ENCODE measurements at regions of chr20 and their contacts with region 1.

Region 1: DNA sequence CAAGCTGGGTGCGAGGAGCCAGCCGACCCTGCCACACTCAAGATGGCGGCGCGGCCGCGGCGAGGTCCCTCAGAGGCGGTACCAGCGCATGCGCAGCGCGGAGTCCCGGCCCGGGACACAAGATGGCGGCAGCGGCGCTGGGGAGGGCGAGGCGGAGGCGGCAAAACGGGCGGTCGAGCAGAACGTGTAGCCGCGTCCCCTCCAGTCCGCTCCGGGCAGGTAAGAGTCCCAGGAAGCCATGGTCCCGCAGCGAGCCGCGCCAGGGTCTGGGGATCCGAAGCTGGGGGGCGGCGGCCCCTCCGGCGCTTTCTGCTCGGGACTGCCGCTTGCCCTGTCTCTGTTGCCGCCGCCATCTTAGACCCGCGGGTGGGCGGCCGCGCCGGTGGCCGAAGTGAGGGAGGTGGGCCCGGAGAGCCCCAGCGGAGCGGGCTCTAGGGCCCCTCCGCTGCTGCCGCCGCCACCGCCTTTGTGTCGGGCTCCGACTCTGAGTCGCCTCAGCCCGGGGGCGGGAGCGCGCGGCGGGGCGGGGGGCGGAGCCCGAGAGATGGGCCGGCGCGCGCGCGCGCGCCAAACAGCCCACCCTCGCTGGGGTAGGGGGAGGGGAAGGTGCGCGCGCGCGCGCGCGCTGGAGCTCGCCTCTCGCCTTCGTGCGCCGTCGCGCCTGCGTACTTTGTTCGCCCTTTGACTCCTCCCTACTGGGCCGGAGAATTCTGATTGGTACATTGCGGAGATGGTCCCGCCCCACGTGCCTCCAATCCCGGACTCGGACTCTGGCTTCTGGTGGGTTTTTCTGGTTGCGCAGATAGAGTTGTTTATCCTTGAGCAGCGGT is at the start of gene PCIF1:
- DNase-seq: peak; percentile 98 to 99 (median 98)
- H3K4me3 ChIP-seq: peak within 1 kb of the TSS; percentile 83 to 97
- H3K4me3 Mint-ChIP-seq: peak within 1 kb of the TSS; percentile 95 to 99 (median 97)
- H3K27ac ChIP-seq: peak within 1 kb of the TSS; percentile 99
- H3K27ac Mint-ChIP-seq: peak within 1 kb of the TSS; percentile 96 to 99 (median 98)
- H3K4me1 ChIP-seq: peaks cover 35% of the 10 kb centered on the region
- H3K4me1 Mint-ChIP-seq: peaks cover 17 to 48% (median 30%) of the 10 kb centered on the region in 4 donors
- H3K27me3 ChIP-seq: no peaks in the 10 kb centered on the region
- H3K27me3 Mint-ChIP-seq: no peaks in the 10 kb centered on the region
- total RNA-seq, gene PCIF1: 63.1 to 69.4 TPM

Region 2: DNA sequence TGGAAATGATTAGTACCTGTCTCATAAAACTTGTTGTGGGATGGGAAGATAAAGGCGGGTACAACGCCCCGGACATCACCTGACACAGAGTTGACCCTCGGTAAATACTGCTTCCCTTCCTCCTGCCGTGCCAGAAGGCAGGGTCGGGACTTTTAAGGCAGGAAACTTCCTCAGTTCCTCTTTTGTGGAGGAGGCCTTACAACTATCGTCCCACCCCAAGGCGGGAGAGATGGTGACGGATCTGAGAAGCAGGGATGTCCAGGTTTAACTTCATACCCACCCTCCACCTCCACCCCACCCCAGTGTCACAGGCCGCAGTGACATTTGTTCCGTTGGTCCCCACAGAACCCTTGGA is 142.5 kb before region 1 on chr20:
- CTCF ChIA-PET with region 1: no interaction called
- POLR2A ChIA-PET with region 1: interaction called, 15 read pairs
- intact Hi-C with region 1: loop called (anchors 1 kb)
- DNase-seq: no peak
- H3K4me3 ChIP-seq: peak overlapping the region; percentile 79 to 93
- H3K4me3 Mint-ChIP-seq: peak overlapping the region; percentile 85 to 98 (median 93)
- H3K27ac ChIP-seq: peak overlapping the region; percentile 88
- H3K27ac Mint-ChIP-seq: peak overlapping the region; percentile 83 to 99 (median 95)
- H3K4me1 ChIP-seq: peaks cover 16% of the 10 kb centered on the region
- H3K4me1 Mint-ChIP-seq: peaks cover 11 to 18% (median 14%) of the 10 kb centered on the region in 4 donors
- H3K27me3 ChIP-seq: no peaks in the 10 kb centered on the region
- H3K27me3 Mint-ChIP-seq: no peaks in the 10 kb centered on the region

Region 3: DNA sequence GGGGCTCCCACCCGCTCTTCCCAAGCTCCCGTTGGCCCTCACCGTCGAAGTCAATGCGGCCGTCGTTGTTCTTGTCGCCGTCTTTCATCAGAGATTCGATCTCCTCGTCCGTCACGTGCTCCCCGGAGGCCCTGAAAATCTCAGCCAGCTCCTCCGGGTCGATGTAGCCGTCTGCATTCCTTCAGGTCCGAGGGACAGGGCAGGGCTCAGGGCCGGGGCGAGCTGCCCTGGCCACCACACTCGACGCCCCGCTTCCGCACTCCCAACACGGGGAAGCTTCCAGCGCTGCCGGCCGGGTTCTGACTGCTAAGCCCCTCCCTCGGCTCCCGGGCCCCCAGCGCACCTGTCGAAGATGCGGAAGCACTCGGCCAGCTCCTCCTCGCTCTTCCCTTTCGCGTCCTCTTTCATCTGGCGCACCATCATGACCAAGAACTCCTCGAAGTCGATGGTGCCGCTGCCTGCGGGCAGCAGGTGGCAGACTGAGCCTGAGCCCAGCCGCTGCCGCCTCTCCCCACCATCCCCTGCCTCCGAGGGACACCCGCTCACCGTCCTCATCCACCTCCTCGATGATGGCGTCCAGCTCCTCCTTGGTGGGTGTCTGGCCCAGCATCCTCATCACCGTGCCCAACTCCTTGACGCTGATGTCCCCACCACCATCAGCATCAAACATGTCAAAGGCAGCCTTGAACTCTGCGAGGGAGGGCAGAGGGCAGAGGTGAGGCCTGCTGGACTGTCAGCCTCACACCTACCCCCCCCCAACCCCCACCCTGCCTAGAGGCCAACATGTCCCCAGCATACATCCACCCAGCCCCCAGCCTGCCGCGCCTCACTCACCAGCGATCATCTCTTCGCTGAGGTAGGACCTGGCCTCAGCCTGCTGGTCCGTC is 110.6 kb before region 1 on chr20:
- CTCF ChIA-PET with region 1: interaction called, 3 read pairs
- POLR2A ChIA-PET with region 1: interaction called, 10 read pairs
- intact Hi-C with region 1: no loop called
- DNase-seq: peak; percentile 37 to 58 (median 47)
- H3K4me3 ChIP-seq: peak overlapping the region in 1 of 2 donors; percentile 46
- H3K4me3 Mint-ChIP-seq: peak overlapping the region; percentile 64 to 84 (median 80)
- H3K27ac ChIP-seq: no peak overlapping the region
- H3K27ac Mint-ChIP-seq: peak overlapping the region in 6 of 7 donors; percentile 2 to 86 (median 66)
- H3K4me1 ChIP-seq: peaks cover 7% of the 10 kb centered on the region
- H3K4me1 Mint-ChIP-seq: peaks cover 7 to 22% (median 15%) of the 10 kb centered on the region in 4 donors
- H3K27me3 ChIP-seq: no peaks in the 10 kb centered on the region
- H3K27me3 Mint-ChIP-seq: peaks cover 6 to 19% of the 10 kb centered on the region in 2 donors

Region 4: GRCh38 chr20:45880988-45881788 is 53.6 kb before region 1 on chr20 and contains the start of gene ZSWIM1:
- CTCF ChIA-PET with region 1: interaction called, 7 read pairs
- POLR2A ChIA-PET with region 1: interaction called, 141 read pairs
- intact Hi-C with region 1: loop called (anchors 1 kb)
- DNase-seq: peak; percentile 97 to 99 (median 97)
- H3K4me3 ChIP-seq: peak within 1 kb of the TSS; percentile 68 to 99
- H3K4me3 Mint-ChIP-seq: peak within 1 kb of the TSS; percentile 82 to 94 (median 90)
- H3K27ac ChIP-seq: peak within 1 kb of the TSS; percentile 65
- H3K27ac Mint-ChIP-seq: peak within 1 kb of the TSS; percentile 83 to 97 (median 95)
- H3K4me1 ChIP-seq: peaks cover 44% of the 10 kb centered on the region
- H3K4me1 Mint-ChIP-seq: peaks cover 30 to 47% (median 37%) of the 10 kb centered on the region in 4 donors
- H3K27me3 ChIP-seq: no peaks in the 10 kb centered on the region
- H3K27me3 Mint-ChIP-seq: no peaks in the 10 kb centered on the region
- total RNA-seq, gene ZSWIM1: 18.2 to 18.5 TPM

Region 5: GRCh38 chr20:45924391-45925261 is 10.2 kb before region 1 on chr20:
- CTCF ChIA-PET with region 1: interaction called, 5 read pairs
- POLR2A ChIA-PET with region 1: interaction called, 13 read pairs
- intact Hi-C with region 1: no loop called
- DNase-seq: no peak
- H3K4me3 ChIP-seq: no peak overlapping the region
- H3K4me3 Mint-ChIP-seq: no peak overlapping the region
- H3K27ac ChIP-seq: no peak overlapping the region
- H3K27ac Mint-ChIP-seq: peak overlapping the region in 2 of 7 donors; percentile 3 to 31
- H3K4me1 ChIP-seq: peaks cover 4% of the 10 kb centered on the region
- H3K4me1 Mint-ChIP-seq: peaks cover 0 to 4% (median 2%) of the 10 kb centered on the region in 4 donors
- H3K27me3 ChIP-seq: peaks cover 7% of the 10 kb centered on the region
- H3K27me3 Mint-ChIP-seq: peaks cover 7 to 11% of the 10 kb centered on the region in 2 donors

Region 6: DNA sequence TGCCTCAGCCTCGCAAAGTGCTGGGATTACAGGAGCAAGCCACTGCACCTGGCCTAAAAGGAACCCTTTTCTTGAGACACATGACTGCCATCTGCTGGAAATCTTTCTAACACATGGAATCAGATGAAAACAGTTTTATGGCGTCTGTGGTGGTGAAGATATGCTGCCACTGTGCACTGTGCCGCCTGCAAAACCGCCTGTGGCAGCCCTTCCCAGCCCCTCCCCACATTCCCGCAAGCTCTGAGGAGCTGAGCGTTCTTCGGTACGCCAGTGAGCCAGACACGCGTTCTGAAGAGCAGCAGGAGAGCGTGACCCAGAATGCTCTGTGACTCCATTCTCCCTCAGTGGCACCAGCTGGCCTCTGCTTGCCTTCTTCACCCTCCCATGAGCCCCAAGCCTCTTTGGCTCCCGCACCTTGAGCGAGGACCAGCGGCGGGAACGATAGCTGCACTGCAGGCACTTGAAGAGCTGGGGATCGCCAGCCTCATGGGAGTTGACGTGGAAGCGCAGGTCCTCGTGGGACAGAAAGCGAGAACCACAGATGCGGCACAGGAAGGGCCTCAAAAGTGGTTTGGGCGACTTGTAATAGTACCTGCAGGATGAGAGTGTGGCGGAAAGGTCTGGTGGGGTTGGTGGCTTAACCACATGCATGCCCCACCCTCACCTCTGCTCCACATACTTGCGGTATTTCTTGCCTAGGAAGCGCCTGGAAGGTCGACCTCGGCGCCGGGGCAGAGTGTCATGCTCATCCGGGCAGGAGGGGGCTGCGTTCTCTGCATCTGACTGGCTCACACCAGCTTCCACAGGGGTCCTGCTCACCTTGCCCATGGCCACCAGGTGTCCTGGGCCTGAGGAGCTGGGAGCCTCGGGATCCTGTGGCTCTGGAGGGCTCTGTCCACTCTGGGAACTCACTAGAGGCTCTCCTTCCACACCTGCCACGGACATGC is 28.5 kb after region 1 on chr20:
- CTCF ChIA-PET with region 1: interaction called, 3 read pairs
- POLR2A ChIA-PET with region 1: interaction called, 245 read pairs
- intact Hi-C with region 1: no loop called
- DNase-seq: peak in 4 of 5 donors; percentile 33 to 51 (median 36)
- H3K4me3 ChIP-seq: no peak overlapping the region
- H3K4me3 Mint-ChIP-seq: peak overlapping the region in 4 of 8 donors; percentile 56 to 64 (median 60)
- H3K27ac ChIP-seq: no peak overlapping the region
- H3K27ac Mint-ChIP-seq: peak overlapping the region; percentile 53 to 87 (median 61)
- H3K4me1 ChIP-seq: no peaks in the 10 kb centered on the region
- H3K4me1 Mint-ChIP-seq: peaks cover 0 to 11% (median 4%) of the 10 kb centered on the region in 4 donors
- H3K27me3 ChIP-seq: no peaks in the 10 kb centered on the region
- H3K27me3 Mint-ChIP-seq: no peaks in the 10 kb centered on the region

Region 7: DNA sequence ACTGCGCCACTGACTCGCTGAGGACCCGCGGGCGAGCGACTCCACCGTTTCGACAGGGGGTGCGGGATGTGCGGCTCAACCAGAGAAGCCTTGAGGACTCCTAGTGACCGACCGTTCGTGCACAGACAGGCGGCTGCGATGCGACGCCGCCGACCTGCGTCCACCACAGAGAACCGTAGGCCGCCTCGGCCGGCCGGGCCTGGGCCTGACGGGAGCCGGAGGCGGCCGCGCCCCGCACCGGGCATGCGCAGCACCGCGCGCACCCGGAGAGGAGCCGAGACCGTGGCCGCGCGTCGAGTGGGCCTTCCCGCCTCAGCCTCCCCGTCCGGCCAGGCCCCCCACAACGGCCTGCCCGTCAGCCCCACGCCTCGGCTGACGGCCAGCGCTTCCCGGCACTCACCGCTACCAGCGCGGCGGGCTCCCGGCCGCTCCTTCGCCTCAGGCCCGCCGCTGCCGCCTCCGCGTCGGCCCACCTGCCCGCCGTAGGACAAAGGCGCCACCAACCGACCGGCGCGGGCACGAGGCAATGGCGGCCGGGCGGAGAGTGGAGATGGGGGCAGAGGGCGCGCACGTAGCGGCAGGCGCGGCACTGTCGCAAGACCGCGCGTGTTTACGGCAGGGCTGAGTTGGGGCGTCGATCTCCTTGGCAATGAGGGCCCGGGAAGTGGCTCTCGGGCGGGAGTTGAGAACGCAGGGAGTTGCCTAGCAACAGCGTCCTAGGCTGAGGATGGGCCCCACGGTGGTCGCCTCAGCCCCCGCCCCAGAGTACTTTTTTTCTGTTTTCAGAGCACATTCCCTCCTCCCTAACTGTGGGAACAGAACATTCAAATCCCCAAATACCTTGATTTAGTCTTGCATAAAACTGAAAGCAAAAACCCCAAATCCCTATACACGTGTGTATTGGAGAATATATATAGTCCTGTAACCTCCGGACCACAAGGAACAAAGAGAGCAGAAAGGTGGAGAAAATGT is 154.9 kb after region 1 on chr20 and contains the start of gene NCOA5:
- CTCF ChIA-PET with region 1: no interaction called
- POLR2A ChIA-PET with region 1: interaction called, 7 read pairs
- intact Hi-C with region 1: loop called (anchors 1 kb)
- DNase-seq: peak; percentile 93 to 96 (median 95)
- H3K4me3 ChIP-seq: peak within 1 kb of the TSS; percentile 58 to 86
- H3K4me3 Mint-ChIP-seq: peak within 1 kb of the TSS; percentile 88 to 93 (median 89)
- H3K27ac ChIP-seq: peak within 1 kb of the TSS; percentile 93
- H3K27ac Mint-ChIP-seq: peak within 1 kb of the TSS; percentile 86 to 95 (median 93)
- H3K4me1 ChIP-seq: peaks cover 50% of the 10 kb centered on the region
- H3K4me1 Mint-ChIP-seq: peaks cover 31 to 55% (median 47%) of the 10 kb centered on the region in 4 donors
- H3K27me3 ChIP-seq: no peaks in the 10 kb centered on the region
- H3K27me3 Mint-ChIP-seq: no peaks in the 10 kb centered on the region
- total RNA-seq, gene NCOA5: 37.8 to 47.2 TPM